Posterior cingulate gyrus (tissue), 11 donors: ENCODE measurements at regions of chr20 and their contacts with region 1.

Region 1: DNA sequence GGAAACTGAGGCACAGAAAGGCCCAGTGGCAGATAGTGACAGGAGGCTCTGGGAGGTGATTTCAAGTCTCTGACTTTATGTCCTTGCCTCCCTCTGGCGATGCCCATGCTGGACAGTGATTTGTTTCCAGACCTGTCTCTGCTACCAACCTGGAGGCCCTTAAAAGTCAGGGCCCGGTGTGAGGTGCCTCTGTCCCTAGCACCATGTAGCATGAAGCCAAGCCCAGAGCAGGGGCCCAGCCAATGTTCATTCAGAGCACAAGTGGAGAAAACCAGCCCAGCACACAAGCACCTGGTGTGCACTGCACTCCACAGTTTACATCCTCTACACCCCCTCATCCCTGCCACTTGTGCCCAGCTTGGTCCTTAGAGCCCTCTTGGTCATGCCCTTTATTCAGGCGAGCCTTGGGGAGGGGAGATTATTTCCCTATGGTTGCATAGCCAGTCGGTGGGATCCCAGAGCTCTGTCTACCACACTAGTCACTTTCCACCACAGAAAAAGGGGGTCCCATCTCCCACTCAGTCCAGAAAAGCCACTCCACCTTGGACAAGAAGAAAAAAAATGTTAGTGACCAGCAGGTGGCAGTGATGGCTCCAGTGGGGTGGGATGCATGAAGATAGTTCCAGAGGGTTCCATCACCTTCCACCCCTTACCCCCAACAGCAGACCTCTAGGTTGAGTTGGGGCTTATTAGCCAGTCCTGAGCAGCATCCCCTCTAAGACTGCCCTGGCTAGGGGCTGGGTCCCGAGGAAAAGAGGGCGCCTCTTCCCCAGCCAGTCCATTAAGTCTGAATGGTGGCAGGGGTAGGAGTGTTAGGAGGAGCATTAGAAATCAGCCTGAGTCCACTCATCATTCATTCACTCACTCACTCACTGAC is 30.9 kb downstream of the KIAA1755 start:
- DNase-seq: peak in 2 of 10 donors; percentile 24 to 51

Region 2: DNA sequence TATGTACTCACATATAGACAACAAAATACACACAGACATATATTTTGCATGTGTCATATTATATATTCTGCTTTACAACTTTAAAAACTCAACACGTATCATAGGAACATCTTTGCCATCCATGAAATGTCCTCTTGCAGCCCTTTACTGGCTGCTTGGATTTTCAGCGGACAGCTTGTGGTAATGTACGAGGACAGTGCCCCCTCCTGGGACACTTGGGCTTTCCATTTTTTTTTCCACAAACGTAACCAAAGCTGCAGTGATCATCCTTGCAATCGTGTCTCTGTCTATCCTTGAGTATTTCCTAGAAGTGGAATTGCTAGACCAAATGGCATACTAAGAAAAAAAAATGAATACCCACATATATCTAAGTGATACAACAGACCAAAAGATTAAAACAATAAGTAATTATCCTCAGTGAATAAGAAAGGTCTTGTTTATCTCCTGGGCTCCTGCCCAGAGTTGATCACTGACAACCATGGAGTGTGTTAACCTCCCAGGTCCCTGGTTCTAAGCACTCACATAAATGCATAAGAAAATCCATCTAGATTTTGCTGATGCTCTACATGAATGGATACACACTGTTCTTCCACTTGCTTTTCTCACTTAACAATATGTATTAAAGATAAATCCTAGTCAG is 92.5 kb after region 1 on chr20:
- intact Hi-C with region 1: loop called (anchors 5 kb)
- DNase-seq: peak in 7 of 10 donors; percentile 52 to 90 (median 54)